ENCODE measurements at regions of chr5 and their contacts with region 1.

Region 1: DNA sequence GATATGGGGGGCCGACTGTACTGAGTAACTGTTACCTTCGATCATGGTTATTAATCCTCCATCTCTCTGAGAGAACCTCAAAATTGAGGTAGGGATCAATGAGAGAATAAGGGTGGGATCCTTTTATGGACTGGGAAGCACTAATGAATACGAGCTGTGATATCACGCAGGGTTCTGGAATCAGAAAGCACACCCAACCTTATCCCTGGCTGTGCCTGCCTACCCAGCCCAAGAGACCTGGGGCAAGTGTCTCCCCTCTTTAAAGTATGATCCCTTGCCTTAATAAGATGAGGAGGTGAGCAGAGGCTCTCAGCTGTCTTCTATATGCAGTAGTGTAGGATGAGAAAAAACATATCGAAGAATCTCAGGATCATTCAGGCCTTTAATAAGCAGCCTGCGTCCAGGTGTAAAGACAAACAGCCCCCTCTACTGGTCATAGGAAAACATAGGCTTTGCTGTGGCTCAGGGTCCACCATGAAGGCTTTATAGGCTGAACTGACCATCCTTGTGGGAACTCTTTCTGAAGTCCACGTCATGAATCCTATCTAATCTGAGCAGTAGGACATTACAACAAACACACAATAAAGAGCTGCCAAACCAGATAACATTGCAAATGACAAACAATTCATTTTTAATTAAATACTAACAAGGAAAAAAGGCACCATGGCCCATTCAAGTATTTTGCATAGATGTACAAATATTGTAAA is 16.8 kb downstream of the NIPAL4 start:
- DNase-seq: peak; percentile 47 to 50
- H3K4me3 ChIP-seq: no peak overlapping the region
- H3K27ac ChIP-seq: no peak overlapping the region
- H3K4me1 ChIP-seq: peaks cover 26% of the 10 kb centered on the region
- H3K27me3 ChIP-seq: no peaks in the 10 kb centered on the region
- CTCF ChIP-seq: peak; percentile 89

Region 2: GRCh38 chr5:157253547-157253946 is 223.3 kb before region 1 on chr5:
- CTCF ChIA-PET with region 1: no interaction called
- POLR2A ChIA-PET with region 1: no interaction called
- intact Hi-C with region 1: loop called (anchors 2 kb)
- DNase-seq: peak in 1 of 2 experiments; percentile 38
- H3K4me3 ChIP-seq: no peak overlapping the region
- H3K27ac ChIP-seq: no peak overlapping the region
- H3K4me1 ChIP-seq: no peaks in the 10 kb centered on the region
- H3K27me3 ChIP-seq: peaks cover 18% of the 10 kb centered on the region; the same call in 1 of the 2 replicates
- CTCF ChIP-seq: peak; percentile 88

Region 3: DNA sequence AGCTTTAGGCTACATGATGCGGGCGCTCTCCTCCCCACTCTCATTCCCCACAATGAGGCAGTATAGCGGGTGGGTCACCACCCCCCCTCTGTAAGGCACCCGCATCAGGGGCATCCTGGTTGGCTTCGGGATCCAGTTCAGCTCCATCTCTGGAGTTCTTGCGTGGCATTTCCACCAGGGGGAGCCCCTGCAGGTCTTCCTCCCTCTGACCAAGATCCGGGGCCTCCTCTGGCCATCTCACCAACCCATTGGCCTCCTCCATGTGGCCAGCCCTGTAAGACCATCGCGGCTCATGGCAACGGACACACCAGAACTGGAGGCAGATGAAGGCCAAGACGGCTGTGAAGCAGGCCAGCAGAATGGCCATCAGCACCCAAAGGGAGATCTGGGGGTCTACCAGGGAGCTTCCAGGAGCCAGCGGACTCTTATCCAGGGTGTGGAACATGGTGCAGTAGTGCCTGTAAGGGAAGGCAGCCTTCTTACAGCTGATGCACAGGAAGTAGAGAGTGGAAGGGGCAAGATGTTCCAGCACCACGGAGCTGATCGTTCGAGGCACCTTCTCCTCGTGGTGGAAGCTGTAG is 133.9 kb before region 1 on chr5:
- CTCF ChIA-PET with region 1: interaction called, 5 read pairs
- POLR2A ChIA-PET with region 1: no interaction called
- intact Hi-C with region 1: loop called (anchors 1 kb)
- DNase-seq: peak in 1 of 2 experiments; percentile 49
- H3K4me3 ChIP-seq: no peak overlapping the region
- H3K27ac ChIP-seq: no peak overlapping the region
- H3K4me1 ChIP-seq: no peaks in the 10 kb centered on the region
- H3K27me3 ChIP-seq: peaks cover 22% of the 10 kb centered on the region; the same call in 1 of the 2 replicates
- CTCF ChIP-seq: peak; percentile 74

Region 4: DNA sequence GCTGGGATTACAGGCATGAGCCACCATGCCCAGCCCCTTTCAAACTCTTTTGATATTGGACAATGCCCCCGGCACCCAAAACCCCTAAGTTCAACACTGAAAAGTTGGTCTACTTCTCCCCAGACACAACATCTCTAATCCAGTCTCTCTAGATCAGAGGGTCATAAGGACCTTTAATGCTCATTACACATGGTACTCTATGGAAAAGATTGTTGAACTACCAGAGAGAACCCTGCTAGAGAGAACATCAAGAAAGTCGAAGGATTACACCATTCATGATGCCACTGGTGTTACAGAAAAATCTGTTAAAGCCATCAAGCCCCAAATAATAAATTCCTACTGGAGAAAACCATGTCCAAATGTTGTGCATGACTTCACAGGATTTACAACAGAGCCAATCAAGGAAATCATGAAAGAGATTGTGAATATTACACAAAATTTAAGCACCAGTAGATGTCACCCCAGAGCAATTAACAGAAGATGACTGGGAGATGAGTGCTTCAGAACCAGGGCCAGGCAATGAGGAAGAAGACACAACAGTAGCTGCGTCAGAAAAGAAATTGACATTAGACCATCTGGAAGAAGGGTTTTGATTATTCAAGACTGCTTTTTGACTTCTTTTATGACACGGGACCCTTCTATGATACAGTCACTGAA is 45.2 kb before region 1 on chr5:
- CTCF ChIA-PET with region 1: interaction called, 6 read pairs
- POLR2A ChIA-PET with region 1: no interaction called
- intact Hi-C with region 1: loop called (anchors 2 kb)
- DNase-seq: no peak
- H3K4me3 ChIP-seq: no peak overlapping the region
- H3K27ac ChIP-seq: no peak overlapping the region
- H3K4me1 ChIP-seq: no peaks in the 10 kb centered on the region
- H3K27me3 ChIP-seq: no peaks in the 10 kb centered on the region
- CTCF ChIP-seq: peak; percentile 63

Region 5: DNA sequence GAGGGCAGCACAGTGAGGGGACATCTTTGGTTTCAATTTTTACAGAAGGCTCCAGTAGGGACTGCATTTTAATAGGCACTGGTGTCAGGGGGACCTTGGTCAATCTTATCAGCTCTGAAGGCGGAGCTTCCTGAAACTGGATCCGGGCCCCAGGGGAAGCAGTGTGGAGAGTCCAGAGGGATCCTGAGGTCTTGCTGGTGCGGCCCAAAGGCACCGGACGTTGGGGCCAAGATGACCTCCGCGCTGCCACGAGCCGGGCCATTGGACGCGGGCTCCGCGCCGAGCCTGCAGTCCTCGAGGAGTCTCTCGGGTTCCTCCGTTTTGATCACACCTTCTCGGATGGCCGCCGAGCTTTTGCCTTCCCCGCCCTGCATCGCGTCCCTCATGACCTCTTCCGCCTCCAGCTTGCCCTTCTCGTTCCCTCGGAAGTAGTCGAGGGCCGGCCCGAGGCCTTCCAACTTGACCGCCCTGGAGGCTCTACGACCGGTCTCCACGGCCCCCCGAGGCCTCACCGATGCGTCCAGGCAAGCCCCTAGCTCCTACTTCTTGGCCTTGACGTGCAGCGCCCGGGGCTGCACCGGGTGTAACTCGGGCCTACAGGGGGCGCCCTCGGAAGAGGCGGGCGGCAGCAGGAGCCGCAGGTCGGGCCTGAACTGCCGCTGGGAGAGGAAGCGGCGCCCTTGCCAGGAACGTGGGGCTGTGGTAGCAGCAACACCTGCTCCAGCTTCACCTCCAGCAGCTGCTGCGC is 213.3 kb after region 1 on chr5:
- CTCF ChIA-PET with region 1: no interaction called
- POLR2A ChIA-PET with region 1: no interaction called
- intact Hi-C with region 1: no loop called
- DNase-seq: no peak
- H3K4me3 ChIP-seq: no peak overlapping the region
- H3K27ac ChIP-seq: no peak overlapping the region
- H3K4me1 ChIP-seq: no peaks in the 10 kb centered on the region
- H3K27me3 ChIP-seq: no peaks in the 10 kb centered on the region
- CTCF ChIP-seq: no peak

Region 6: DNA sequence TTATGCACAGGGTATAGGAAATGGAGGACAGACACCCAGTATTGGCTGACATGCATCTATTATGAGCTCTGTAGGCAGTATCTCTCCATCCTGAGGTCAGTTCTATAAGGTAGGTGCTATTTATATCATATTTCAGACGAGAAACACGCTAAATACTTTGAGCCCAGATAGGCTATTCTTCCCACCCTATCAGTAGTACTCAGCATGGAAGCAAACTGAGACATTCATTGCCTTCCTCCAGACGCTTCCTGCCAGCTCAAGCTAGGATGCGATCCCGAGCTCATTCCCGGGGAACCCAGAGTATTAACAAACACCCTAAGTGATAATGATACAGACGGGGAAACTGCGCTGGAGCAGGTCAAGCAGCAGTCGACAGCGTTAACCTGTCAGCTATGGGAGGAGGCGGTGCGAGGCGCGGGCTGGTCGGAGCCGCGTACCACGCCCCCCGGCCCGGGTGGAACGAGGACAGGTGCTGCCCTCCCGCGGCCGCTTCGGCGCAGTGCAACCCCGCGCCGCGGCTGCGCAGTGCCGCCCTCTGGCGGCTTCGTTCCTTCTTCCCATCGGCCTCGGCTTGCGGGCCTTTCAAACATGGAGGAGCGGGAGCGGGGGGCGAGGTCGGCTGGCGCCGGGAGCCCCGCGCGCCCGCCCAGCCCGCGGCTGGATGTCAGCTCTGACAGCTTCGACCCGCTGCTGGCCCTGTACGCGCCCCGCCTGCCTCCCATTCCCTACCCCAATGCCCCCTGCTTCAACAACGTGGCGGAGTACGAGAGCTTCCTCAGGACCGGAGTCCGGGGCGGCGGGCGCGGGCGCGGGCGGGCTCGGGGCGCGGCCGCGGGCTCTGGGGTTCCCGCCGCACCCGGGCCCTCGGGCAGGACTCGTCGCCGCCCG is 266.6 kb after region 1 on chr5 and contains the start of gene LSM11:
- CTCF ChIA-PET with region 1: interaction called, 6 read pairs
- POLR2A ChIA-PET with region 1: no interaction called
- intact Hi-C with region 1: loop called (anchors 5 kb)
- DNase-seq: peak; percentile 66 to 94
- H3K4me3 ChIP-seq: peak within 1 kb of the TSS; percentile 89
- H3K27ac ChIP-seq: no peak within 1 kb of the TSS
- H3K4me1 ChIP-seq: peaks cover 12% of the 10 kb centered on the region
- H3K27me3 ChIP-seq: no peaks in the 10 kb centered on the region
- CTCF ChIP-seq: peak; percentile 95
- total RNA-seq, gene LSM11: 1.9 and 2.1 TPM in 2 replicates

Measured in PC-9 (cell line).